Aorta (tissue), 5 donors: ENCODE measurements at regions of chr12 and their contacts with region 1.

Region 1: DNA sequence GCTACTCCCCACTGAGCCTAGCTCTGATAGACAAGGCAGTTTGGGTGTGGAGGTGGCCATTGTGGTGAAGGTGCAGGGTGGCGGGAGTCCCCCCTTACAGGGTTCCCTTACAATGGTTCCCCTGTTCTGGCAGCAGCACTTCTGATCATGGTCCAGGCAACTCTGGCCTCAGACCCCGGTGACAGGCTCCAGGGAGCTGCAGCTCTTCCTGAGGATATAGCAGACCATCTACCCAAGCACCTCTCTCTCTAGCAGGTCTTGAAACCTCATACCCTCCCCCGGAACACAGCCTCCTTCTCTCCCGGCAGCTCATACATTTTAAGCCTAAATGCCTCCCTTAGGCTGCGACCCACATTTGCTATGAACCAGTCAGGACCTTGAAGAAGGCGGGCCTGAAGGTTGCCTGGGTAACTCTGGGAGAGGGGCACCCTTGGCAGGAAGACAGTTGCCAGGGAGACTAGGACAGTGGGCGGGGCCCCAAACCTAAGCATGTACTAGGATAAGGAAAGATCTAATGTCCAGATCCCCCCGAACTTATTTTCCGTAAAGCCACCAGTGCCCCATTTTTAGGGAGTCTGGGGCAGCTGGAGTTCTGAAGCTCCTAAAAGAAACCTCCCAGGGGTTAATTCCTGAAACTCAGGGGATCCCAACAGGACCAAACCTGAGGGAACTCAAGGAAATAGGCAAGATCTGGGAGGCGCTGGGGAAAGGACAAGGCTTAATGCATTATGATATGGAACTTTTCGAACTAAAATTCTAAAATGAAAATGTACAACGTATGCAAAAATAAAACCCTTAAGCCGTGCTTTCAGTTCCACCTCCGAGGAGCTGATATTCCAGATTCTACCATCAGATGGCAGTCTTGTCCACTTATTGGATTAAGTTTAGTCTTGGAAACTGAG is 4.5 kb upstream of the GDF11 start:
- DNase-seq: peak; percentile 91 to 92
- ATAC-seq: peak; percentile 90
- H3K4me3 ChIP-seq: peak overlapping the region; percentile 52 to 81
- H3K27ac ChIP-seq: peak overlapping the region in 1 of 2 donors; percentile 80
- H3K4me1 ChIP-seq: no peaks in the 10 kb centered on the region
- H3K27me3 ChIP-seq: no peaks in the 10 kb centered on the region

Region 2: DNA sequence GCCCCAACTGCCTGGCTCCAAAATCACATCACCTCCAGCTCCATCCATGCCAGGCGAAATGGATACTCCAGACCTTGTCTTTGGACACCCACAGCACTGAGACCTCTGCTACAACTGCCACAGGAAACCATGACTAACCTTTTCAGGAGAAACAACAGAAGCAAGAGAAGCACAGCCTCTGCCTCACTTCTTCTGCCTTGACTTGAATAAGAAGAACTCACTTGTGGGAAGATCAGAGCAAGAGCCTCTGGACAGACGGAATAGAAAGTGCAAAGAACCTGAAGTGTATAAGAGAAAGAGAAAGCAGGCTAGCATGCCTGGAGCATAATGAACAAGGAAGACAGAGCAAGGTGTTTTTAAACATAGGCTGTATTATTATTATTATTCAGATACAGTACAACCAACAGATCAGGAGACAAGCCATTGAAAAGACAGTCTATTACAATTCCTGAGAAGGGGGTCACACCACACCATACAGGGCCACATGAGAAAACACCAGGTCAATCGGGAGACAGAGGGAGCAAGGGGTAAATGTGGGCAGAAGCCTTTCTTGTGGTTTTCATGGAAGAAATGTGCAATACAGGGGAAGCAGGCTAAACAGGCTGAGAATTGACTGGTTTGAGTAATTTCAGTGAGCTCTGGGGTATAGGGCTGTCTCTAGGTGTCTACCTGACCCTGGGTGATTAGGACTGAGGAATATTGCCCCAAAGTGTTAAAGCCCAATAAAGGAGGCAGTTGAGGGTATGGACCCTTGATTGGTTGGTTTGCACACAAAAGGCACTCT is 109.1 kb before region 1 on chr12:
- intact Hi-C with region 1: no loop called
- DNase-seq: no peak
- ATAC-seq: no peak
- H3K4me3 ChIP-seq: no peak overlapping the region
- H3K27ac ChIP-seq: no peak overlapping the region
- H3K4me1 ChIP-seq: no peaks in the 10 kb centered on the region
- H3K27me3 ChIP-seq: no peaks in the 10 kb centered on the region

Region 3: DNA sequence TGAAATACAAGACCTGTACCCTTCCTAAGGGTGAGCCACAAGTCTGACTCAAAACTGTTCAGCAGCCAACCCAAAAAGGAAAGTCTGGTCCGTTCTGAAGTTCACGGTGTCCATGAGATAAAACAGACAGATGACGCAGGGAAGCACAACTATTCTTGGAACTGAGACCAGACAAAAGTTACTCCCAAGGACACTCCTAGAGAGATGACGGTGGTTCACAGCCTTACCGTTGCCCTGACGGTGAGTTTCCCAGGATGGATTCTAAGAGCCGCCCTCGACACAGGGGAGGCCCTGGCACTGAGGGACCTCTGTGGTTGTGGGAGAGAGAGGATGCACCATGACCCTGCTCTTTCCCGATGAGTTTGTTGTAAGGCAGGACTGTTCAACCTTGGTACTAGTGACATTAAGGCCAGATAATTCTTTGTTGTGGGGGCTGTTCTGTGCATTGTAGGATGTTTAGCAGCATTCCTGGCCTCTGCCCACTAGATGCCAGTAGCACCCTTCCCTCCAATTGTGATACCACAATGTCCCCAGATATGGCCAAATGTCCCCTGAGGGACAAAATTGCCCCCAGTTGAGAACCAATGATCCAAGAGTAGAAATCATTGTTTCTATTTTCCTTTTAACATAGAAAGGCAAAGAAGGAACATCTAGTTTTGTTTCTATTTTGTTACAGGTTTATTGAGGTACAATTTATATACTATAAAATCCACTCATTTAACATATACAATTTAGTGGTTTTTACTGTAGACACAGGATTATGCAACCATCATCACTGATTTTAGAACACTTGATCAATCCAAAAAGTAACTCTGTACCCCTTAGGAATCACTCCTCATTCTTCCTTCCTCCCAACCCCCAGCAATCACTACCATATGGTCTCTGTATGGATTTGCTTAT is 78.6 kb before region 1 on chr12:
- intact Hi-C with region 1: loop called (anchors 5 kb)
- DNase-seq: no peak
- ATAC-seq: no peak
- H3K4me3 ChIP-seq: no peak overlapping the region
- H3K27ac ChIP-seq: no peak overlapping the region
- H3K4me1 ChIP-seq: no peaks in the 10 kb centered on the region
- H3K27me3 ChIP-seq: no peaks in the 10 kb centered on the region

Region 4: GRCh38 chr12:55681142-55682077 is 57.0 kb before region 1 on chr12:
- intact Hi-C with region 1: loop called in 1 of 2 experiments (anchors 2 kb)
- DNase-seq: peak; percentile 78 to 84
- ATAC-seq: peak; percentile 70
- H3K4me3 ChIP-seq: no peak overlapping the region
- H3K27ac ChIP-seq: no peak overlapping the region
- H3K4me1 ChIP-seq: no peaks in the 10 kb centered on the region
- H3K27me3 ChIP-seq: no peaks in the 10 kb centered on the region

Region 5: GRCh38 chr12:55771736-55772135 is 33.4 kb after region 1 on chr12:
- intact Hi-C with region 1: no loop called
- DNase-seq: no peak
- ATAC-seq: no peak
- H3K4me3 ChIP-seq: no peak overlapping the region
- H3K27ac ChIP-seq: no peak overlapping the region
- H3K4me1 ChIP-seq: no peaks in the 10 kb centered on the region
- H3K27me3 ChIP-seq: no peaks in the 10 kb centered on the region

Region 6: DNA sequence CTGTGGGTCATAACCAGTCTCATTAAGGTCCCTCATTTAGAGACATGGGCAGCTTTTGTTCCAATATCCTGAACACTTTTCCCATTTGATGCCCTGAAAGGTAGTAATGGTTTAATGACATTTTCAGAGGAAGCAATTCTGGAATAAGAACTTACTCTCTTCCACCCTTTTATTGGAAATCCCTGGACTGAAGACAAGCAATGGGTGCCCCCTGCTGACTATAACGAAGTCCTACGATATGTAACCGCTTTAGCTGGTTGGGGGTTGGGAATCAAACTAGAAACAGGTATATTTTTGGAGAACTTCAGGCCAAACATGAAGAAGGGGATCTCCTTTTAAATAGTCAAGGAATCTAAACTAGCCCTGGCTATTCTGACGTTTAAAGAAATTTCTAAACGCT is 58.7 kb after region 1 on chr12:
- intact Hi-C with region 1: loop called (anchors 5 kb)
- DNase-seq: no peak
- ATAC-seq: no peak
- H3K4me3 ChIP-seq: no peak overlapping the region
- H3K27ac ChIP-seq: no peak overlapping the region
- H3K4me1 ChIP-seq: no peaks in the 10 kb centered on the region
- H3K27me3 ChIP-seq: no peaks in the 10 kb centered on the region

Region 7: GRCh38 chr12:55829967-55830600 is 91.7 kb after region 1 on chr12:
- intact Hi-C with region 1: loop called in 1 of 2 experiments (anchors 5 kb)
- DNase-seq: peak; percentile 69 to 86
- ATAC-seq: peak; percentile 57
- H3K4me3 ChIP-seq: peak overlapping the region; percentile 77 to 79
- H3K27ac ChIP-seq: peak overlapping the region; percentile 78 to 91
- H3K4me1 ChIP-seq: peaks cover 0 to 3% of the 10 kb centered on the region in 2 donors
- H3K27me3 ChIP-seq: no peaks in the 10 kb centered on the region

Region 8: GRCh38 chr12:55940065-55940732 is 201.8 kb after region 1 on chr12:
- intact Hi-C with region 1: loop called (anchors 2 to 5 kb)
- DNase-seq: peak; percentile 88 to 91
- ATAC-seq: peak; percentile 92
- H3K4me3 ChIP-seq: no peak overlapping the region
- H3K27ac ChIP-seq: peak overlapping the region in 1 of 2 donors; percentile 15
- H3K4me1 ChIP-seq: no peaks in the 10 kb centered on the region
- H3K27me3 ChIP-seq: no peaks in the 10 kb centered on the region

Region 9: GRCh38 chr12:55966408-55967281 is 228.3 kb after region 1 on chr12 and contains the start of gene CDK2:
- intact Hi-C with region 1: loop called in 1 of 2 experiments (anchors 10 kb)
- DNase-seq: peak; percentile 95 to 98
- ATAC-seq: peak; percentile 96
- H3K4me3 ChIP-seq: peak within 1 kb of the TSS; percentile 66 to 72
- H3K27ac ChIP-seq: peak within 1 kb of the TSS in 1 of 2 donors; percentile 32
- H3K4me1 ChIP-seq: no peaks in the 10 kb centered on the region
- H3K27me3 ChIP-seq: no peaks in the 10 kb centered on the region
- total RNA-seq, gene CDK2: 29.8 to 35.5 TPM